MCF 10A (cell line): ENCODE measurements at regions of chr13 and their contacts with region 1.

Region 1: DNA sequence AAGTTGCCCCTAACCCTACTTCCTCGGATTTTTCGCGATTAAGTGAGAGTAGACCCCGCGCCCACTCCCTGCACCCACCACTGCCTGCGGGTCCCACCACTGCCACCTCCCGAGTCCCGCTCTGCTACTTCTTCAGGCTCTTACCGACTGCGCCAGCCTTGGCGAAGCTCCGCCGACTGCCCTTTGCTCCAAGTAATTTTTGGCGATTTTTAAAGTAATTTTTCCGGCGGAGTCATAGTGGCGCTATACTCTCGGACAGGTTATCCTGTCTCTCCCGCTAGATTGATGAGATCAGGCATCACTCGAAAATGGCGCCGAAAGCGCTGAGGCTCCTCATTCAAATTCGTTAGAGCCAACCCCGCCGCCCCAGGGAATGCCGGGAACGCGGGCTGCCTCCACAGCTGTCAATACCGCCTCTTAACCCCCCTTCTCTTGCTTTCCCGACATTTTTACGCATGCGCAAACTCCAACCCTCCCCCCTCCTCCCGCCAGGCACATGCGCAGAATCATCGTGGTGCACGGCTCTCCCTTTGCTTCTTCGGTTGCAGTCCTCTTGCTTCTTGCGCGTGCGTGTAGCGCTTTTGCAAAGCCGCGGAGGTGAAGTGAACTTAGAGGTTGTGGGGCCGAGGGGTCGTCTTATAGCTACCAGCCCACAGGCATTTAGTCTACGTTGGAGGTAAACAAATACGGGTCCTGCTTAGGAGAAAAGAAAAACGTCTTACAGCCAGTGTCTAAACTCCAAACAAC is 66.6 kb downstream of the KCNRG start:
- DNase-seq: peak; percentile 99
- H3K4me3 Mint-ChIP-seq: peak overlapping the region; percentile 97
- H3K27ac Mint-ChIP-seq: peak overlapping the region; percentile 99
- H3K4me1 Mint-ChIP-seq: peaks cover 11% of the 10 kb centered on the region
- H3K27me3 Mint-ChIP-seq: no peaks in the 10 kb centered on the region
- CTCF ChIP-seq: no peak

Region 2: DNA sequence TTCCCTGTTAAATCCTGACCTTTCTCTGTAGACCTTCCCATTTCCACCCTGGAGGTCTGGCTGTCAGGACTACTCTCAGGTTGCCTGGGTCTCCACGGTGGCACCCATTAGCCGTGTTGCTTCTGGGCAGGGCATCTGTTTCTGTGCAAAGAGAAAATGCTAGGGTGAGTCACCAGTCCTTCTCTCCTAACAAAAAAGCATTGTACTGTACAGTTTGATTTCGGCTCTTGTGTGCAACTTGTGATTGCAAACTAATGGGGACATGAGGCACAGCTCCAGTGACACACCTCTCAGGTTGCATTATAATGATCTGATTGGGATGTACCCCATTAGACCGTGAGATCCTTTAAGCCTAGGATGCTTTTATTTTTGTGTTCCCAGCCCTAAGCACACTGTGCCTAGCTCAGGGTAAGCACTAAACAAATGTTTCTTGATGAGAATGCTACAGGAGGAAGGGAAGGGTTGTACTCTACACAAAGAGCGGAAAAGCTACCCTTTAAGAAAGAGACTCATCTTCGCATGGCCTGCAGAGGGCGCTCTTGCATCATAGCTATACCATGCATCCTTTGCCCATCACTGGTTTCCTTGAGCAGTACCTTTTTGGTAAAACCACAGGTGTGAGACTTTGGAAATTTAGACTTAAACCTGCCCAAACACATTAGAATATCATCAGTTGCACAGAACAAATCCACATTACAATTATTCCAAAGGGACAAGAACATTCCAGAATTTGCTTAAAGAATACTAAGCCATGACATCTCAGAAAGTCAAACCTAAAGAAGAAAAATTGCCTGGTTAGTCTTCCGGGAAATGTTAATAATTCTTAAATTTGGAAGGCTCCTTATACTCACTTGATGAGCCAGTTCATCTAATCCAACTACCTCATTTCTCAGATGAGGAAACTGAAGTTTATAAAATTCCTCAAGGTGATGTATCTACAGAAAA is 105.3 kb before region 1 on chr13:
- CTCF ChIA-PET with region 1: interaction called, 3 read pairs
- POLR2A ChIA-PET with region 1: interaction called, 9 read pairs
- intact Hi-C with region 1: loop called (anchors 5 kb)
- DNase-seq: peak; percentile 85
- H3K4me3 Mint-ChIP-seq: no peak overlapping the region
- H3K27ac Mint-ChIP-seq: peak overlapping the region; percentile 21
- H3K4me1 Mint-ChIP-seq: peaks cover 11% of the 10 kb centered on the region
- H3K27me3 Mint-ChIP-seq: no peaks in the 10 kb centered on the region
- CTCF ChIP-seq: peak; percentile 88

Region 3: GRCh38 chr13:50060718-50061117 is 21.1 kb before region 1 on chr13:
- CTCF ChIA-PET with region 1: interaction called, 6 read pairs
- POLR2A ChIA-PET with region 1: interaction called, 362 read pairs
- intact Hi-C with region 1: no loop called
- DNase-seq: no peak
- H3K4me3 Mint-ChIP-seq: no peak overlapping the region
- H3K27ac Mint-ChIP-seq: no peak overlapping the region
- H3K4me1 Mint-ChIP-seq: peaks cover 3% of the 10 kb centered on the region
- H3K27me3 Mint-ChIP-seq: no peaks in the 10 kb centered on the region
- CTCF ChIP-seq: no peak

Region 4: DNA sequence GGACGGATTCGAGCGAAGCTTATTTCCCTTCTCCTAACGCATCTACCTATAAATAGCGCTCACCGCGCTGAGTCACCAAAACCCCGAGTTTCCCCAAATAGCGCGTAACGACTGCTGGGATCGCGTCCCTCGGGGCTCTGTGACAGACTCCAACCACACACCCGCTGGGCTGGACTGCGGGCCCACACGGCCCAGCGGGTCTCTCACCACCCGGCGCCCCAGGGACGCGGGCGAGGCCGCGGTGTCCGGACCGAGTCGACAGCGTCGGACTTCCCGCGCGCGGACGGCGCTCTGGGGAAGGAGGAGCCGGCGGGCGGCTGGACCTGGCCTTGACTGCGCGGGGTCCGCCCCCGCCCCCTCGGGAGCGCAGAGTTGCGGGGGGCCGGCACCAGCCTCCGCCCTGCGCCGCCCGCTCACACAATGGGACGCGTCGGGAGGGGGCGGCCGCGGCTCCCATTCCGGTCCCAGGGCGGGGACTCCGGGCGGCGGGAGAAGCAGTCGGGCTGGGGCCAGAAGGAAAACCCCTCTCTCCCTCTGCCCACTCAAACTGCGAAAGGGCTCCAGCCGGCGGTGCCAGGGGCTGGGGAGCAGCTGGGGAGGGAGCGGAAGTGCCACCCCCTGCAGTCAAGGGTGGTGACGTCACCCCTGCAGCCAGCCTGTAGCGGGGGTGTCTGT is 42.1 kb after region 1 on chr13:
- CTCF ChIA-PET with region 1: interaction called, 14 read pairs
- POLR2A ChIA-PET with region 1: interaction called, 429 read pairs
- intact Hi-C with region 1: loop called (anchors 1 kb)
- DNase-seq: peak; percentile 92
- H3K4me3 Mint-ChIP-seq: peak overlapping the region; percentile 87
- H3K27ac Mint-ChIP-seq: peak overlapping the region; percentile 94
- H3K4me1 Mint-ChIP-seq: peaks cover 28% of the 10 kb centered on the region
- H3K27me3 Mint-ChIP-seq: no peaks in the 10 kb centered on the region
- CTCF ChIP-seq: no peak

Region 5: GRCh38 chr13:50529154-50529882 is 447.5 kb after region 1 on chr13:
- CTCF ChIA-PET with region 1: interaction called, 15 read pairs
- POLR2A ChIA-PET with region 1: interaction called, 142 read pairs
- intact Hi-C with region 1: loop called (anchors 1 kb)
- DNase-seq: peak; percentile 92
- H3K4me3 Mint-ChIP-seq: peak overlapping the region; percentile 68
- H3K27ac Mint-ChIP-seq: peak overlapping the region; percentile 98
- H3K4me1 Mint-ChIP-seq: peaks cover 37% of the 10 kb centered on the region
- H3K27me3 Mint-ChIP-seq: no peaks in the 10 kb centered on the region
- CTCF ChIP-seq: no peak

Region 6: DNA sequence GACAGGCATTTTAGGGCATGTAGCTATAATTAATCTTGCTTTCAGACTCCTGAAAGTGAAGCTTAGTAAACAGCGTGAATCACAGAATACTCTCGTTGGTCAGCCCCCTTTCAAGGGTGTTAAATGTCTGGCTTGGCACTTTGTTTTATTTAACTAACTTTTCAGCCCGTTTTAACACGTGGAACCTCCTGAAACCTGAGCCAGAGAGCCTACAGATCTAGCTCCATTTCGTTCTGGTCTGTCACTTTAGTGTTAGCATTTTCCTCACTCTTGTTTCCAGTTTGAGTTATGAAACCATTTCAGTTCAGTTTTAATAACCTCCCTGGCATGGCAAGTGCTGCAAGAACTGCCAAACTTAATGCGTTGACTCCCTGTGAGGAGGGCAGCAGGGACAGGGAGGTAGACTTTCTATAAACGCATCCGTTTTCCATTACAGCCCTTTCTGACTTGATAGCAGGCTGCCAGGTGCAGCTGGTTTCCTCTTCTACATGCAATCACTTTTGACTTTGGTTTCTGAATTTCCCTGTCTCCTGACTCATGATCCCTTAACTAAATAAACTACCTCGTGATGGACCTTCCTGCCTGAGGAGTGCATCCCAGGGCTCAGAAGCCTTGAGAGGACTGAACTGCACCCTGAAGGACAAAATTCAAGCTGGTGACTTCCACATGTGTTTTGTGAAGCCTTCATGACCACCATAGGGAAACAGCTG is 568.9 kb after region 1 on chr13:
- CTCF ChIA-PET with region 1: no interaction called
- POLR2A ChIA-PET with region 1: no interaction called
- intact Hi-C with region 1: no loop called
- DNase-seq: no peak
- H3K4me3 Mint-ChIP-seq: no peak overlapping the region
- H3K27ac Mint-ChIP-seq: no peak overlapping the region
- H3K4me1 Mint-ChIP-seq: peaks cover 6% of the 10 kb centered on the region
- H3K27me3 Mint-ChIP-seq: no peaks in the 10 kb centered on the region
- CTCF ChIP-seq: no peak

Region 7: GRCh38 chr13:50894012-50894411 is 812.2 kb after region 1 on chr13:
- CTCF ChIA-PET with region 1: no interaction called
- POLR2A ChIA-PET with region 1: no interaction called
- intact Hi-C with region 1: no loop called
- DNase-seq: no peak
- H3K4me3 Mint-ChIP-seq: no peak overlapping the region
- H3K27ac Mint-ChIP-seq: no peak overlapping the region
- H3K4me1 Mint-ChIP-seq: no peaks in the 10 kb centered on the region
- H3K27me3 Mint-ChIP-seq: no peaks in the 10 kb centered on the region
- CTCF ChIP-seq: no peak

Region 8: GRCh38 chr13:51070005-51070649 is 988.3 kb after region 1 on chr13:
- CTCF ChIA-PET with region 1: interaction called, 15 read pairs
- POLR2A ChIA-PET with region 1: no interaction called
- intact Hi-C with region 1: no loop called
- DNase-seq: peak; percentile 77
- H3K4me3 Mint-ChIP-seq: no peak overlapping the region
- H3K27ac Mint-ChIP-seq: no peak overlapping the region
- H3K4me1 Mint-ChIP-seq: peaks cover 9% of the 10 kb centered on the region
- H3K27me3 Mint-ChIP-seq: peaks cover 14% of the 10 kb centered on the region
- CTCF ChIP-seq: peak; percentile 94